PC-3 (cell line): ENCODE measurements at regions of chr6 and their contacts with region 1.

Region 1: GRCh38 chr6:19804205-19805123 is 32.7 kb upstream of the ID4 start:
- DNase-seq: peak; percentile 94
- ATAC-seq: peak; percentile 93
- H3K4me3 ChIP-seq: peak overlapping the region; percentile 82
- H3K27ac ChIP-seq: peak overlapping the region; percentile 58
- H3K4me1 ChIP-seq: peaks cover 23% of the 10 kb centered on the region
- H3K27me3 ChIP-seq: no peaks in the 10 kb centered on the region
- CTCF ChIP-seq: no peak

Region 2: DNA sequence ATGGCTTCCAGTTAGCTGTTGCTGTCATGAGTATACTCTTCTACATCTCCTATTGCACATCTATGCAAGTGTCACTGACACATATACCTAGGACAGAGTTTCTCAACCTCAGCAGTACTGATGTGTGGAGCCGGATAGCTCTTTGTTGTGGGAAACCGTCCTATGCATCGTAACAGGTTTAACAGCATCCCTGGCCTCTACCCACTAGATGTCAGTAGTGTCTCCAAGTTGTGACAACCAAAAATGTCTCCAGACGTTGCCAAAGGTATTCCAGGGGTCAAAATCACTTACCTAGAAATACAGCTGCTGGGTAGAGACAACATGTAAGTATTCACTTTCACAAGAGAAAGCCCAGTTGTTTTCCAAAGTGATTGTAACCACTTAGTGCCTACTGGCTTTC is 779.7 kb before region 1 on chr6:
- CTCF ChIA-PET with region 1: interaction called, 13 read pairs
- POLR2A ChIA-PET with region 1: interaction called, 4 read pairs
- intact Hi-C with region 1: no loop called
- DNase-seq: peak; percentile 81
- ATAC-seq: peak; percentile 91
- H3K4me3 ChIP-seq: no peak overlapping the region
- H3K27ac ChIP-seq: no peak overlapping the region
- H3K4me1 ChIP-seq: peaks cover 9% of the 10 kb centered on the region; the same call in 1 of the 2 replicates
- H3K27me3 ChIP-seq: no peaks in the 10 kb centered on the region
- CTCF ChIP-seq: peak; percentile 85

Region 3: GRCh38 chr6:19472847-19473246 is 331.6 kb before region 1 on chr6:
- CTCF ChIA-PET with region 1: no interaction called
- POLR2A ChIA-PET with region 1: interaction called, 4 read pairs
- intact Hi-C with region 1: loop called (anchors 2 kb)
- DNase-seq: peak; percentile 49
- ATAC-seq: no peak
- H3K4me3 ChIP-seq: no peak overlapping the region
- H3K27ac ChIP-seq: peak overlapping the region; percentile 57; the same call in 1 of the 2 replicates
- H3K4me1 ChIP-seq: peaks cover 23% of the 10 kb centered on the region
- H3K27me3 ChIP-seq: no peaks in the 10 kb centered on the region
- CTCF ChIP-seq: peak; percentile 51

Region 4: GRCh38 chr6:19753826-19754225 is 50.6 kb before region 1 on chr6:
- CTCF ChIA-PET with region 1: no interaction called
- POLR2A ChIA-PET with region 1: no interaction called
- intact Hi-C with region 1: loop called (anchors 2 kb)
- DNase-seq: no peak
- ATAC-seq: no peak
- H3K4me3 ChIP-seq: no peak overlapping the region
- H3K27ac ChIP-seq: no peak overlapping the region
- H3K4me1 ChIP-seq: peaks cover 30% of the 10 kb centered on the region
- H3K27me3 ChIP-seq: no peaks in the 10 kb centered on the region
- CTCF ChIP-seq: no peak